Left cardiac atrium (tissue), 4 donors: ENCODE measurements at regions of chr16 and their contacts with region 1.

Region 1: GRCh38 chr16:47460711-47461597 is at the starts of genes ITFG1 and PHKB:
- DNase-seq: peak; percentile 95
- ATAC-seq: peak; percentile 96 to 97
- total RNA-seq, gene ITFG1: 50.2 to 53.2 TPM
- total RNA-seq, gene PHKB: 47.7 to 53.5 TPM

Region 2: DNA sequence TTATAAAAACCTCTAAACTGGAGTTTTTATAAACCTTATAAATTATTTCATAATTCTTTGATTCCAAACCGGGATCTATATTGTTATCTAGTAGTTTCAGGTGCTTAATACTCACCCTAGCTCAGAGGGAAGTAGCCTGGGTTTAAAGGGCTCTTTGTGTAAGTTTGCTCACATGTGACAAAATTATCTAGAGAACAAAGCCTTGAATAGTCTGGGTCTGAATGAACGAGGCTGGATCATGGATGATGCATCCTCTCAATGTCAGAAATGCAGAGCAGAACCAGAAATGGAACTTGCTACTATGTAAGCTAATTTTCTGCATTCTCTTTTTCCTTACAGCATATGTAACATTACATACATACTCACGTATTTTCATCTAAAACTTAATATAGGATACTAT is 213.3 kb before region 1 on chr16:
- intact Hi-C with region 1: no loop called
- DNase-seq: no peak
- ATAC-seq: no peak

Region 3: DNA sequence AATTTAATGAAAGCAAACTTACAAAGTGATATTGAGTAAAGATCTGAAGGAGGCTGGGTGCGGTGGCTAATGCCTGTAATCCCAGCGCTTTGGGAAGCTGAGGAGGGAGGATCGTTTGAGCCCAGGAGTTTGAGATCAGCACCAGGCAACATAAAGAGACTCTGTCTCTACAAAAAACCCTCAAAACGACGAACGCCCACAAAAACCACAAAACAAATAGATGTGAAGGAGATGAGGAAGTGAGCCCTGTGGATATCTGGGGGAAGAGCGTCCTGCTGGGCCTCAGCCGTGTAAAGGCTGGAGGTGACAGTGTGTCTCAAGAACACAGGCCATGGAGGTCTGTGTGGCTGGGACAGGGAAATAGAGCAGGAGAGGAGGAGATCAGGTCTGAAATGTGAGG is 68.9 kb before region 1 on chr16:
- intact Hi-C with region 1: loop called in 1 of 2 experiments (anchors 10 kb)
- DNase-seq: no peak
- ATAC-seq: no peak

Region 4: GRCh38 chr16:47523342-47524006 is 62.5 kb after region 1 on chr16:
- intact Hi-C with region 1: loop called in 1 of 2 experiments (anchors 10 kb)
- DNase-seq: no peak
- ATAC-seq: no peak